WTC11 (cell line): ENCODE measurements at regions of chr1 and their contacts with region 1.

Region 1: GRCh38 chr1:162040681-162041080 is 17.0 kb upstream of the OLFML2B start:
- DNase-seq: no peak
- ATAC-seq: peak; percentile 71
- H3K4me3 Mint-ChIP-seq: no peak overlapping the region
- H3K27ac Mint-ChIP-seq: no peak overlapping the region
- H3K4me1 Mint-ChIP-seq: peaks cover 3% of the 10 kb centered on the region
- H3K27me3 Mint-ChIP-seq: no peaks in the 10 kb centered on the region
- CTCF ChIP-seq: no peak

Region 2: DNA sequence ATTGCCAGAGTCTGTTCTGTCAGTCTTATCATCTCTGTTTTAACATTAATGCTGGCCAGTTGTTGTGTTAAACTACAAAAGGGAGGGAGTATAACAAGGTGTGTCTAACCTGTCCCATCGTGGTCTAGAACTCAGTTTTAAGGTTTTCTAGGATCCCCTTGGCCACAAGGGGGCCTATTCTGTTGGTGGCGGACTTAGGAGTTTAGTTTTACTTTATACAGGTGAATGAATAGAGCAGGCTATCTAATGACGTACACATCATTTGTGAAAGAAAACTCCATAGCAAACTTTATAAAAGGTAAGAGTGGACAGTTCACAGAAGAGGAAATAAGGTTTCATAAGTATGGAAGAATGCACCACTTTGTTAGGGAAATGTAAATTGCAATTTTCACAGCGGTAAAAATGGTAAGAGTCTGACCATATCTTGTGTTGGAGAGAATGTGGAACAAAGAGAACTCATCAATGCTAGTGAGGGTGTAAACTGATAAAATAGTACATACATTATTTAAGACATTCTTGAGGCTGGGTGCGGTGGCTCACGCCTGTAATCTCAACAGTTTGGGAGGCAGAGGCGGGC is 277.1 kb before region 1 on chr1:
- CTCF ChIA-PET with region 1: interaction called, 10 read pairs
- POLR2A ChIA-PET with region 1: no interaction called
- DNase-seq: no peak
- ATAC-seq: peak; percentile 57
- H3K4me3 Mint-ChIP-seq: peak overlapping the region; percentile 43
- H3K27ac Mint-ChIP-seq: no peak overlapping the region
- H3K4me1 Mint-ChIP-seq: peaks cover 8% of the 10 kb centered on the region
- H3K27me3 Mint-ChIP-seq: peaks cover 2% of the 10 kb centered on the region; the same call in 1 of the 2 replicates
- CTCF ChIP-seq: peak; percentile 63

Region 3: GRCh38 chr1:161801955-161802354 is 238.7 kb before region 1 on chr1:
- CTCF ChIA-PET with region 1: interaction called, 15 read pairs
- POLR2A ChIA-PET with region 1: no interaction called
- DNase-seq: peak; percentile 22
- ATAC-seq: peak; percentile 94
- H3K4me3 Mint-ChIP-seq: no peak overlapping the region
- H3K27ac Mint-ChIP-seq: peak overlapping the region; percentile 19; the same call in 1 of the 2 replicates
- H3K4me1 Mint-ChIP-seq: peaks cover 6% of the 10 kb centered on the region
- H3K27me3 Mint-ChIP-seq: no peaks in the 10 kb centered on the region
- CTCF ChIP-seq: no peak

Region 4: DNA sequence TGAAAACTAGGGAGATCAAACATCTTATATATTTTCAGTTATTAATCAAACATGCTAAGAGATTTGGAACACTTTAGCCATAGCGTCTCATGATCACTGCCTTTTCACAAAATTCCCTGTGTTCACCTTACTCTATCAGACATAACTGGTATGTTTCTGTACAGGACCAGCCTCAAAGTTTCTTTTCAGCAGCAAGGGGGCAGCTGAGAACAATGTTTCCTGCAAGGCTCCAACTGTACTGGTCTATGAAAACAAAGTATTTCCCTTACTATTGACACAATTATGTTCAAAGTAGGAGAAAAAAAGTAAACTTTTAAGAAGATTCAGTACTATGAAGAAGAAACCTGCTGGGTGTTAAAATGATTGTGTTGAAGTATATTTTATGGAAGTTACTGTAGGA is 176.1 kb before region 1 on chr1:
- CTCF ChIA-PET with region 1: interaction called, 14 read pairs
- POLR2A ChIA-PET with region 1: no interaction called
- DNase-seq: no peak
- ATAC-seq: no peak
- H3K4me3 Mint-ChIP-seq: no peak overlapping the region
- H3K27ac Mint-ChIP-seq: no peak overlapping the region
- H3K4me1 Mint-ChIP-seq: no peaks in the 10 kb centered on the region
- H3K27me3 Mint-ChIP-seq: no peaks in the 10 kb centered on the region
- CTCF ChIP-seq: no peak

Region 5: DNA sequence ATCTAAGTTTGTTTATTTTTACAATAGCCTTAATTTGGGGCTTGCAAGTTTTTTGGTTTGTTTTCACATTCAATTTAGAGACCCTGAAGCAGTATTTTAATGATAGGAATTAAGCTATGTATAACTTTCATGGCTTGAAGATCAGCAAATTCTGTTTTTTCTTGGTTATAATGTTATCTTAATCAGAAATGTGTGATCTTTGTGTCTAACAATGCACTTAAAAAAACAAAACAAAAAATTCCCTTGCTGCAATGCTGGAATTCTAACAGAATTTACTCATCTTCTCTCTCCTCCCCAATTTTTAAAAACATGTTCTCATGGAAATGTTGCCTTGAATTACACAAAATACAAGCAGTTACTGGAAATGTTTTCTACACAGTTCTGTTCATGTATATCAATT is 130.1 kb before region 1 on chr1:
- CTCF ChIA-PET with region 1: interaction called, 14 read pairs
- POLR2A ChIA-PET with region 1: no interaction called
- DNase-seq: no peak
- ATAC-seq: no peak
- H3K4me3 Mint-ChIP-seq: no peak overlapping the region
- H3K27ac Mint-ChIP-seq: no peak overlapping the region
- H3K4me1 Mint-ChIP-seq: peaks cover 3% of the 10 kb centered on the region
- H3K27me3 Mint-ChIP-seq: no peaks in the 10 kb centered on the region
- CTCF ChIP-seq: no peak

Region 6: DNA sequence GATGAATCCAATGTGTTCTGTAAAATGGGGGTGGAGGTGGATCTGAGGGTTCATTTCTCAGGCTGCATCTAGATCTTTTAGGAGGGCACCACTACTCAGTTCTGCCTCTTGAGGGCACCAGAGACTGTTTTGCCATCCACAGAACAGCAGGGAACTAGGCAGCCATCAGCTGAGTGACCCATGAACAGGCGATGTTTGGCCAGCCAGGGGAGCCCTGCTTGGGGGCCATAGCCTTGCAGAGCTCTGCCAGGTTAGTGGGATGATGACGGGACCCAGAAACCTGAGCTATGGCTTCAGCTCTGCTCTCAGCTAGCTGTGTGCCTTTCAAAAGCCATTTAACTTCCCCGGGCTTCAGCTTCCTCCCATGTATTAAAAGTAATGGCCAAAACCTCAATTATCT is 15.4 kb after region 1 on chr1:
- CTCF ChIA-PET with region 1: interaction called, 13 read pairs
- POLR2A ChIA-PET with region 1: no interaction called
- DNase-seq: peak; percentile 85
- ATAC-seq: peak; percentile 99
- H3K4me3 Mint-ChIP-seq: no peak overlapping the region
- H3K27ac Mint-ChIP-seq: no peak overlapping the region
- H3K4me1 Mint-ChIP-seq: peaks cover 4% of the 10 kb centered on the region; the same call in 1 of the 2 replicates
- H3K27me3 Mint-ChIP-seq: peaks cover 7% of the 10 kb centered on the region; the same call in 1 of the 2 replicates
- CTCF ChIP-seq: peak; percentile 75

Region 7: DNA sequence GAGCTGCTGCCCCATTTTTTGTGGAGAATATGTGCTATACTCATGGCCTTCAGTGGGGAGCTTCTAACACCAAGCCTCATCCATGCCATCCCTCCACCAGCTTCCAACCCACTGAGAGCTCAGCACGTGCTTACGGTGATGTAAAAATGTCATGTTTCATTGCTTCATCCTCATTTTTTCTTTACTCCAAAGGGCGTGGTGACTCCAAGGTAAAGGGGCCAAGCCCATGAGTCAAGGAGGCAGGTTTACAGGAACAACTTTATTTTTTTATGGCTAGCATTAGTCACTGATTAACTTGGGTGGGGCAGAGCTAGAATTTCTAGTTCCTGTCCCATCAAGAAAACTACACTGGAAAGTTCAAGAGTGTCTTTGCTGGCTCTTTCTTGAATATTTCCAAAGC is 340.7 kb after region 1 on chr1 and contains the start of gene C1orf226:
- CTCF ChIA-PET with region 1: no interaction called
- POLR2A ChIA-PET with region 1: no interaction called
- DNase-seq: no peak
- ATAC-seq: no peak
- H3K4me3 Mint-ChIP-seq: no peak within 1 kb of the TSS
- H3K27ac Mint-ChIP-seq: no peak within 1 kb of the TSS
- H3K4me1 Mint-ChIP-seq: peaks cover 5% of the 10 kb centered on the region; the same call in 1 of the 2 replicates
- H3K27me3 Mint-ChIP-seq: no peaks in the 10 kb centered on the region
- CTCF ChIP-seq: no peak
- total RNA-seq, gene C1orf226: 15.7 to 21.4 TPM (median 18.8 TPM) in 3 replicates